ENCODE measurements at regions of chr15 and their contacts with region 1.

Region 1: DNA sequence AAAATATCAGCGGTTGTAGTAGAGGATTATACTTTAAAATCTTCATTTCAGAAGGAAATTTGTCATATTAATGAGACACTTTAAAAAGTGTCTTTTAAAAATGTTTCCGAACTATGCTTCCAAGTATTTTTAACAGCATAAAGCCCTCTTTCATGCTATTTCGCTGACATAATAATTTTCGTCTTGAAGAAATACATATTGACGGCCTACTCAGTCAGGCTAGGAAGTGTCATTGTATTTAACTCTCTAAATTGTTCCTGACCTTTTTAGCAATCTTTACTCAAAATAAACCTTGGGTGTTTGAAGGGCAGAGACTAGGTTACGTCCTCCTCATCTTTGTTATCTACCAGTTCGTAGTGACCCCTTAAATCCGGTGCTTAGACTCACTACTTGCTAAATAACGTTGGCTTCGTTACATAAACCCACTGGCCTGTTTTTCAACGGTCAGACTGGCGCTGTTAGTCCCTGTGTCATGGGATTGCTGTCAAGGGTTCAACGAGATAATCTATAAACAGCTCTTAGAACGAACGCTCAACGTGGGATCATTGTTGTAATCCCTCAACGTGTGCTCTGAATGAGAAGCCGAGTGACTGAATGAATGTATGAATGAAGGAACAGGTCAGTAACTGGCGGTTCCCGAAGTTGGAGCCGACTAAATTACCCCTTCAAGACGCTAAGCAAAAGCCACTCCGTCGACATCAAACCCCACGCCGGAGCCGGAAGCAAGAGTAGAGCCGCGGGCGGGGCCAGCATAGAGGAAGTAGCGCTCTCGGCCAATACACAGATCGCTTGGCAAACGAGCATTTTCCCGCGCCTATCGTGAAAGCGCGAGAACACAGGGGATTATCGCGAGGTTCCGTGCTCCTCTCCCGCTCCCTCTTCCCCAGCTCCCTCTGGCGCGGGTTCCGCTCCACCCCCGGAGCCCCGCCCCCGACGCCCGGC is 516 bp upstream of the LRRC28 start:
- DNase-seq: peak; percentile 92 to 99
- H3K4me3 ChIP-seq: peak overlapping the region; percentile 63 to 89
- H3K27ac ChIP-seq: peak overlapping the region; percentile 89 to 92
- H3K4me1 ChIP-seq: peaks cover 8 to 14% of the 10 kb centered on the region in 2 donors
- H3K27me3 ChIP-seq: no peaks in the 10 kb centered on the region
- CTCF ChIP-seq: no peak

Region 2: DNA sequence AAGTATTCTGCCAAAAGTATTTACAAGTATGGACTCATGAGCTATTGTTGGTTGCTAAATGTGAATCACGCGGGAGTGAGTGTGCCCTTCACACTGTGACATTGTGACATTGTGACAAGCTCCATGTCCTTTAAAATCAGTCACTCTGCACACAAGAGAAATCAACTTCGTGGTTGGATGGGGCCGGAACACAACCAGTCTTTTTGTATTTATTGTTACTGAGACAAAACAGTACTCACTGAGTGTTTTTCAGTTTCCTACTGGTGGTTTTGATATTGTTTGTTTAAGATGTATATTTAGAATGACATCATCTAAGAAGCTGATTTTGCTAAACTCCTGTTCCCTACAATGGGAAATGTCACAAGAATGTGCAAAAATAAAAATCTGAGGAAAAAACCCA is 115.6 kb before region 1 on chr15:
- intact Hi-C with region 1: no loop called
- DNase-seq: no peak
- H3K4me3 ChIP-seq: no peak overlapping the region
- H3K27ac ChIP-seq: peak overlapping the region; percentile 39 to 40
- H3K4me1 ChIP-seq: peaks cover 0 to 4% of the 10 kb centered on the region in 2 donors
- H3K27me3 ChIP-seq: no peaks in the 10 kb centered on the region
- CTCF ChIP-seq: no peak

Region 3: DNA sequence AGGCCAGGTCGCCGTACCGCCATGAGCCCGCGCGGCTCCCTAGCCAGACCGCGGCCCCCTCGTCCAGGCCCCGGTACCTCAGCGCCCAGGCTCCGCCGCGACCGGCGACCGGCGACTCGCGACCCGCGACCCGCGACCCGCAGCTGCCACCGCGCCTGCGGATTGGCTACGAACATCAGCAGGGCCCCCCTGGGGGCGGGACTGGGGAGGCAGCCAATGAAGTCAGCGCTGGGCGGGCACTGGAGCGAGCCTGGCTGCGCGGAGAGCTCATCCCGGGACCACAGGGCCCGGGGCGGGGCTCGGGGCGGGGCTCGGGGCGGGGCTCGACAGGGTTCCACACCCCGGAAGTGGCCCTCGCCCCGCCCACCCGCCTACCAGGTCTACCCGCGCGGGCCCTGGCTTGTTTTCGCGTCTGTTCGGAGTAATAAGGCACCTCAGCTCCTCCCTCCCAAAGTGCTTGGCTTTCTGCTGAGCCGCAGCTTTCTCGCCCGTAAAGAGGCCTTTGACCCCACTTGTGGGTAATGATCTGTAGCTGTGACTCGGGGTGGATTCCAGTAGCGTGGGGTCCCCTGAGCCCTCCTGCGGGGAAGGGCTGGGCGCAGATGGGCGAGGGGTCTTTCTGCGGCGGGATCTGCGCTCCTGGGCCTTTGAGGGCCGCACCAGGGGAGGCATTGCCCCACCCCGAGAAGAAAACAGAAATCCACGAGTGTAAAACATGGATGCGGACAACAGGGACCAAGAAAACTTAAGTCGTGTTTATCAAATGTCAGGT is 482.7 kb after region 1 on chr15 and contains the start of gene LYSMD4:
- intact Hi-C with region 1: loop called (anchors 1 kb)
- DNase-seq: peak; percentile 90 to 99
- H3K4me3 ChIP-seq: peak within 1 kb of the TSS; percentile 79 to 81
- H3K27ac ChIP-seq: peak within 1 kb of the TSS; percentile 83 to 84
- H3K4me1 ChIP-seq: peaks cover 0 to 21% of the 10 kb centered on the region in 2 donors
- H3K27me3 ChIP-seq: no peaks in the 10 kb centered on the region
- CTCF ChIP-seq: no peak
- total RNA-seq, gene LYSMD4: not detected